ENCODE measurements at regions of chr1 and their contacts with region 1.

Region 1: GRCh38 chr1:113849060-113849459 is 22.5 kb downstream of the PTPN22 start:
- DNase-seq: no peak
- ATAC-seq: no peak

Region 2: GRCh38 chr1:113898241-113898814 is 49.3 kb after region 1 on chr1:
- intact Hi-C with region 1: loop called in 1 of 2 experiments (anchors 10 kb)
- DNase-seq: no peak
- ATAC-seq: no peak

Measured in left colon (tissue), 2 donors.